Naive thymus-derived CD8-positive, alpha-beta T cell (primary cell): ENCODE measurements at regions of chr12 and their contacts with region 1.

Region 1: DNA sequence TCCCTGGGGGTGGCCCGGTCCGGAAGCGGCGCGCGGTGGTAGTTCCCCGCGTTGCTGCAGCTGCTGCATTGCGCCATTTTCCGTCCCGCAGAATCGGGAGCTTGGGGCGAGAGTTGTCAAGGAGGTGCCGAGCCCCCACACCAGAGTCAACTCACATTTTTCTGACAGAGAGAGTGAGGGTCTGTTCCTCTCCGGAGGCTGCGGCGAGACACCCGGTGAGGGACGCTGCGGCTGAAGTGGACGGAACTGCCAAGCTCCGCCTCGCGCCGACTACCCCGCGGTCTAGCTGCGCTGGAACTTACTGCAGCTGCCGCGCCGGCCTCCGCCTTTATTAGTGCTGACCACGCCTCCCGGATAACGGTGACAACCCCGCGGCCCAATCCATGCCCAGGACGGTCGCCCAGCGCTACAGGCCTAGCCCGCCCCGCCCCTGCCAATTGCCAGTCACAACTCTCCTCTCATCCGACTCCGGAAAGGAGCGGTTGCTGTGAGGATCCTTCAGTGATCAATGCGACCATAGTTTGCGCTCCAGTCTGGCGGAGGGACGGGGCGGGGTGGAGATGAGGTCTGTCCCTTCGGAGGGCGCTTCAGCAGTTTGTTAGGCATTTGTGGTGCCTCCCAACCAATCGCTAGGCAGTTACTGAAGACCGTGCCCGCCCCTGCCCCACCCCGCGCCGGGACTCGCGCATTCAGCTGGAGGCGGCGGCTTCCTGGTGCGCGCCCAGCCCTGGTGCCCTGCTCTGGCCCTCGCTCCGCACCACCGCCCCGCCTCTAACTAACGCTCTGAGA is at the start of gene VAMP1:
- DNase-seq: peak; percentile 90 to 98 (median 95)
- ATAC-seq: peak; percentile 88
- H3K4me3 Mint-ChIP-seq: peak within 1 kb of the TSS; percentile 78 to 96 (median 92)
- H3K27ac Mint-ChIP-seq: peak within 1 kb of the TSS; percentile 82 to 98 (median 95)
- H3K4me1 Mint-ChIP-seq: peaks cover 30 to 54% (median 52%) of the 10 kb centered on the region in 4 donors
- H3K27me3 Mint-ChIP-seq: peaks cover 0 to 2% (median 0%) of the 10 kb centered on the region in 5 donors
- polyA plus RNA-seq, gene VAMP1: 9.7 to 13.6 (median 10.9) TPM

Region 2: GRCh38 chr12:6341417-6342139 is 129.0 kb before region 1 on chr12 and contains the start of gene TNFRSF1A:
- POLR2A ChIA-PET with region 1: interaction called, 62 read pairs
- DNase-seq: peak in 5 of 10 donors; percentile 30 to 62 (median 52)
- ATAC-seq: peak; percentile 39 to 49
- H3K4me3 Mint-ChIP-seq: no peak within 1 kb of the TSS
- H3K27ac Mint-ChIP-seq: peak within 1 kb of the TSS in 1 of 10 donors; percentile 95
- H3K4me1 Mint-ChIP-seq: peaks cover 29 to 47% (median 45%) of the 10 kb centered on the region in 4 donors
- H3K27me3 Mint-ChIP-seq: peaks cover 0 to 3% (median 0%) of the 10 kb centered on the region in 5 donors
- polyA plus RNA-seq, gene TNFRSF1A: 19.5 to 43.7 (median 31.1) TPM

Region 3: GRCh38 chr12:6434205-6435140 is 36.1 kb before region 1 on chr12:
- POLR2A ChIA-PET with region 1: interaction called, 1,074 read pairs
- DNase-seq: peak in 7 of 10 donors; percentile 17 to 58 (median 44)
- ATAC-seq: peak; percentile 93 to 98
- H3K4me3 Mint-ChIP-seq: peak overlapping the region; percentile 51 to 86 (median 69)
- H3K27ac Mint-ChIP-seq: peak overlapping the region; percentile 92 to 98 (median 96)
- H3K4me1 Mint-ChIP-seq: peaks cover 22 to 48% (median 44%) of the 10 kb centered on the region in 4 donors
- H3K27me3 Mint-ChIP-seq: no peaks in the 10 kb centered on the region

Region 4: GRCh38 chr12:6451348-6452244 is 19.0 kb before region 1 on chr12 and contains the start of gene TAPBPL:
- POLR2A ChIA-PET with region 1: interaction called, 1,074 read pairs
- DNase-seq: peak; percentile 65 to 90 (median 83)
- ATAC-seq: peak; percentile 86 to 95
- H3K4me3 Mint-ChIP-seq: peak within 1 kb of the TSS; percentile 95 to 100 (median 98)
- H3K27ac Mint-ChIP-seq: peak within 1 kb of the TSS; percentile 95 to 100 (median 100)
- H3K4me1 Mint-ChIP-seq: peaks cover 46 to 79% (median 75%) of the 10 kb centered on the region in 4 donors
- H3K27me3 Mint-ChIP-seq: no peaks in the 10 kb centered on the region
- polyA plus RNA-seq, gene TAPBPL: 46.0 to 126 (median 106) TPM

Region 5: DNA sequence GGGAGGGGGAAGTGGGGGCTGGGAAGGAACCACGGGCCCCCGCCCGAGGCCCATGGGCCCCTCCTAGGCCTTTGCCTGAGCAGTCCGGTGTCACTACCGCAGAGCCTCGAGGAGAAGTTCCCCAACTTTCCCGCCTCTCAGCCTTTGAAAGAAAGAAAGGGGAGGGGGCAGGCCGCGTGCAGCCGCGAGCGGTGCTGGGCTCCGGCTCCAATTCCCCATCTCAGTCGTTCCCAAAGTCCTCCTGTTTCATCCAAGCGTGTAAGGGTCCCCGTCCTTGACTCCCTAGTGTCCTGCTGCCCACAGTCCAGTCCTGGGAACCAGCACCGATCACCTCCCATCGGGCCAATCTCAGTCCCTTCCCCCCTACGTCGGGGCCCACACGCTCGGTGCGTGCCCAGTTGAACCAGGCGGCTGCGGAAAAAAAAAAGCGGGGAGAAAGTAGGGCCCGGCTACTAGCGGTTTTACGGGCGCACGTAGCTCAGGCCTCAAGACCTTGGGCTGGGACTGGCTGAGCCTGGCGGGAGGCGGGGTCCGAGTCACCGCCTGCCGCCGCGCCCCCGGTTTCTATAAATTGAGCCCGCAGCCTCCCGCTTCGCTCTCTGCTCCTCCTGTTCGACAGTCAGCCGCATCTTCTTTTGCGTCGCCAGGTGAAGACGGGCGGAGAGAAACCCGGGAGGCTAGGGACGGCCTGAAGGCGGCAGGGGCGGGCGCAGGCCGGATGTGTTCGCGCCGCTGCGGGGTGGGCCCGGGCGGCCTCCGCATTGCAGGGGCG is 63.5 kb after region 1 on chr12 and contains the start of gene GAPDH:
- POLR2A ChIA-PET with region 1: interaction called, 100 read pairs
- DNase-seq: peak in 8 of 10 donors; percentile 69 to 91 (median 82)
- ATAC-seq: peak; percentile 58 to 68
- H3K4me3 Mint-ChIP-seq: peak within 1 kb of the TSS; percentile 87 to 97 (median 92)
- H3K27ac Mint-ChIP-seq: peak within 1 kb of the TSS; percentile 94 to 99 (median 98)
- H3K4me1 Mint-ChIP-seq: peaks cover 18 to 51% (median 50%) of the 10 kb centered on the region in 4 donors
- H3K27me3 Mint-ChIP-seq: no peaks in the 10 kb centered on the region
- polyA plus RNA-seq, gene GAPDH: 1,014 to 1,110 (median 1,062) TPM